ENCODE measurements at regions of chr7 and their contacts with region 1.

Region 1: GRCh38 chr7:129271500-129272355 is 46.9 kb downstream of the AHCYL2 start:
- DNase-seq: peak; percentile 70 to 73 (median 72)
- H3K4me3 ChIP-seq: no peak overlapping the region
- H3K4me3 Mint-ChIP-seq: peak overlapping the region in 4 of 8 donors; percentile 22 to 76 (median 50)
- H3K27ac ChIP-seq: no peak overlapping the region
- H3K27ac Mint-ChIP-seq: peak overlapping the region in 3 of 7 donors; percentile 33 to 60 (median 36)
- H3K4me1 ChIP-seq: no peaks in the 10 kb centered on the region
- H3K4me1 Mint-ChIP-seq: peaks cover 0 to 6% (median 5%) of the 10 kb centered on the region in 4 donors
- H3K27me3 ChIP-seq: no peaks in the 10 kb centered on the region
- H3K27me3 Mint-ChIP-seq: no peaks in the 10 kb centered on the region

Region 2: GRCh38 chr7:129240119-129240815 is 31.5 kb before region 1 on chr7:
- CTCF ChIA-PET with region 1: interaction called, 11 read pairs
- POLR2A ChIA-PET with region 1: no interaction called
- intact Hi-C with region 1: no loop called
- DNase-seq: no peak
- H3K4me3 ChIP-seq: no peak overlapping the region
- H3K4me3 Mint-ChIP-seq: no peak overlapping the region
- H3K27ac ChIP-seq: no peak overlapping the region
- H3K27ac Mint-ChIP-seq: peak overlapping the region in 2 of 7 donors; percentile 3 to 29
- H3K4me1 ChIP-seq: no peaks in the 10 kb centered on the region
- H3K4me1 Mint-ChIP-seq: peaks cover 13 to 19% (median 14%) of the 10 kb centered on the region in 4 donors
- H3K27me3 ChIP-seq: no peaks in the 10 kb centered on the region
- H3K27me3 Mint-ChIP-seq: no peaks in the 10 kb centered on the region

Region 3: GRCh38 chr7:129258649-129259389 is 12.9 kb before region 1 on chr7:
- CTCF ChIA-PET with region 1: interaction called, 30 read pairs
- POLR2A ChIA-PET with region 1: no interaction called
- intact Hi-C with region 1: no loop called
- DNase-seq: peak in 2 of 5 donors; percentile 13 to 14
- H3K4me3 ChIP-seq: no peak overlapping the region
- H3K4me3 Mint-ChIP-seq: peak overlapping the region; percentile 45 to 88 (median 74)
- H3K27ac ChIP-seq: no peak overlapping the region
- H3K27ac Mint-ChIP-seq: peak overlapping the region; percentile 15 to 91 (median 80)
- H3K4me1 ChIP-seq: peaks cover 25% of the 10 kb centered on the region
- H3K4me1 Mint-ChIP-seq: peaks cover 22 to 37% (median 29%) of the 10 kb centered on the region in 4 donors
- H3K27me3 ChIP-seq: no peaks in the 10 kb centered on the region
- H3K27me3 Mint-ChIP-seq: no peaks in the 10 kb centered on the region

Region 4: GRCh38 chr7:129285111-129285510 is 13.4 kb after region 1 on chr7:
- CTCF ChIA-PET with region 1: interaction called, 24 read pairs
- POLR2A ChIA-PET with region 1: no interaction called
- intact Hi-C with region 1: no loop called
- DNase-seq: no peak
- H3K4me3 ChIP-seq: no peak overlapping the region
- H3K4me3 Mint-ChIP-seq: no peak overlapping the region
- H3K27ac ChIP-seq: no peak overlapping the region
- H3K27ac Mint-ChIP-seq: no peak overlapping the region
- H3K4me1 ChIP-seq: no peaks in the 10 kb centered on the region
- H3K4me1 Mint-ChIP-seq: peaks cover 0 to 2% (median 0%) of the 10 kb centered on the region in 4 donors
- H3K27me3 ChIP-seq: no peaks in the 10 kb centered on the region
- H3K27me3 Mint-ChIP-seq: no peaks in the 10 kb centered on the region

Region 5: DNA sequence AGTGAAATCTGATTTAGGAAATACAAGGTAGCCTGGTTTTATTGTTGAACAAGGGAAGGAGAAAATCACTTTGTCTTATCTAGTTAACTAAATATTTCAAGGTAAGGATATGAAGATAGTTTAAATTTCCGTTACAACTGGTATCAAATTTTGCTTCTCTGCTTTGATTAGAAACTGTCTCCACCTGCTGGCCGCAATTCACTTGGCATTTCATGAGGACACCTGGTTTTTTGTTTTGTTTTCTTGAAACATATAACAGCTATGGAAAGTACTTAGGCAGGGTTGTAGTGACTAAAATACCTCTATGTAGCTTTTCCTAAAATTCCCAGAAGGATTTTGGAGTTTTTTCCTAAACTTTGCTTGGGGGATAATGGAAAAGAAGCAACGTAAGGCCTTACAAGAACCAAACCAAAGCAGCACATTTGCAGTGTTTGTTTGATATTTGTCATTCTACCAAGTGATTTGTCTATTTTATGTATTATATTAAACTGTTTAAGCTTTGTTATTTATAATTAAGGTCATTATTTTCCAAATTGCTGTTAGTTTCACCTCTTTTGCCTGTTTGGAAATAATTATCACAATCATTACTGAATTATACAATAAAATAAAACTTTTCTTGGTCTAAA is 26.7 kb after region 1 on chr7:
- CTCF ChIA-PET with region 1: interaction called, 11 read pairs
- POLR2A ChIA-PET with region 1: no interaction called
- intact Hi-C with region 1: loop called (anchors 1 kb)
- DNase-seq: peak in 4 of 5 donors; percentile 22 to 45 (median 32)
- H3K4me3 ChIP-seq: no peak overlapping the region
- H3K4me3 Mint-ChIP-seq: no peak overlapping the region
- H3K27ac ChIP-seq: no peak overlapping the region
- H3K27ac Mint-ChIP-seq: peak overlapping the region in 1 of 7 donors; percentile 61
- H3K4me1 ChIP-seq: no peaks in the 10 kb centered on the region
- H3K4me1 Mint-ChIP-seq: peaks cover 0 to 1% (median 0%) of the 10 kb centered on the region in 4 donors
- H3K27me3 ChIP-seq: no peaks in the 10 kb centered on the region
- H3K27me3 Mint-ChIP-seq: no peaks in the 10 kb centered on the region

Measured in CD4-positive, alpha-beta memory T cell (primary cell).